Panc1 (cell line): ENCODE measurements at regions of chr2 and their contacts with region 1.

Region 1: DNA sequence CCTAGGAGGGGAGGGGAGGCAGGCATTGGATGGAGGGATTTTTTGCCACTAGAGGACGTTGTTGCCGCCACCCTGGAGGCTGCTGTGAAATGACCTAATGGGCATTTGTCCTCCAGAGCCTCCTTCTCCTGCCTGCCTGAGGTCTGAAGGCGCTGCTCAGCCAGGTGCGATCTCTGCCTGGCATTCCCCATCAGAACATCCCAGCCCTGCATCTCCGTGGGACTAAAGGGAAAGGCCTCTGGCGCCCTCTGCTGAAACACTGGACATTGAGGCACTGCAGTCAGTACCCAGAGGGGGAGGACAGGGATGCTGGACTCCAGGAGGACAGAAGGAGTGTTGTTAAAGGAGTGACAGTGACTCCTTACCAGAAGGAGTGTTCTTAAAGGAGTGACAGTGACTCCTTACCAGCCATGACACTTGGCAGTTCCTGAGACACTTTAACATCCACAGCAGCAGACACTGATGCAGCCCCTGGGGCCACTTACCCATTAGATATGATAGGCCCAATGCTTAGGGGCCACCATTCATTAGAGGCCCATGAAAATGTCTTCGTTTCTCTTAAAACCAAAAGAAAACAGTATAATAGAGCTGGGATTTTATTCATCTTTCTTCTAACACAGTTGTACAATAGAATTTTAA is 17.0 kb downstream of the THNSL2 start:
- DNase-seq: peak; percentile 30
- ATAC-seq: peak; percentile 90
- H3K4me3 ChIP-seq: no peak overlapping the region
- H3K27ac ChIP-seq: no peak overlapping the region
- H3K4me1 ChIP-seq: no peaks in the 10 kb centered on the region
- H3K27me3 ChIP-seq: no peaks in the 10 kb centered on the region
- CTCF ChIP-seq: peak; percentile 87

Region 2: GRCh38 chr2:88059979-88060906 is 126.9 kb before region 1 on chr2:
- CTCF ChIA-PET with region 1: interaction called, 4 read pairs
- POLR2A ChIA-PET with region 1: no interaction called
- in situ Hi-C with region 1: no loop called
- intact Hi-C with region 1: loop called (anchors 1 kb)
- DNase-seq: no peak
- ATAC-seq: peak; percentile 51; the same call in 1 of the 2 replicates
- H3K4me3 ChIP-seq: no peak overlapping the region
- H3K27ac ChIP-seq: no peak overlapping the region
- H3K4me1 ChIP-seq: peaks cover 4% of the 10 kb centered on the region; the same call in 1 of the 2 replicates
- H3K27me3 ChIP-seq: no peaks in the 10 kb centered on the region
- CTCF ChIP-seq: peak; percentile 87

Region 3: DNA sequence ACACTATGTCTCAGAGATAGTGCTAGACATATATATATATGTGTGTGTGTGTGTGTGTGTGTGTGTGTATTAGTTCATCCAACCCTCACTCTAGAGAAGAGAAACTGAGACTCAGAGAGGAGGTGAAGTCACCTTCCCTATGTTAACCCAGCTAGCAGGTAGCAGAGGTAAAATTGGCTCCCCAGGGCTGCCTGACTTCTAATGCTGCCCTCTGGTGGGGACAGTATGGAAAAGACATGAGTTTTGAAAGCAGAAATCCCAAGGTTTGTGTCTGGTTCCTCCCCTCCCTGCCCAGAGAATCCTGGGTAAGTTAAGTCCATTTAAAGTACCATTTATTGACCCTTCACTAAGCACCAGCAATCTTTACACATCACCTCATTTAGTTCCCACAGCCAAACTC is 120.7 kb after region 1 on chr2:
- CTCF ChIA-PET with region 1: no interaction called
- POLR2A ChIA-PET with region 1: no interaction called
- in situ Hi-C with region 1: no loop called
- intact Hi-C with region 1: loop called (anchors 5 kb)
- DNase-seq: peak; percentile 10
- ATAC-seq: peak; percentile 53; the same call in 1 of the 2 replicates
- H3K4me3 ChIP-seq: no peak overlapping the region
- H3K27ac ChIP-seq: no peak overlapping the region
- H3K4me1 ChIP-seq: no peaks in the 10 kb centered on the region
- H3K27me3 ChIP-seq: no peaks in the 10 kb centered on the region
- CTCF ChIP-seq: peak; percentile 75

Region 4: DNA sequence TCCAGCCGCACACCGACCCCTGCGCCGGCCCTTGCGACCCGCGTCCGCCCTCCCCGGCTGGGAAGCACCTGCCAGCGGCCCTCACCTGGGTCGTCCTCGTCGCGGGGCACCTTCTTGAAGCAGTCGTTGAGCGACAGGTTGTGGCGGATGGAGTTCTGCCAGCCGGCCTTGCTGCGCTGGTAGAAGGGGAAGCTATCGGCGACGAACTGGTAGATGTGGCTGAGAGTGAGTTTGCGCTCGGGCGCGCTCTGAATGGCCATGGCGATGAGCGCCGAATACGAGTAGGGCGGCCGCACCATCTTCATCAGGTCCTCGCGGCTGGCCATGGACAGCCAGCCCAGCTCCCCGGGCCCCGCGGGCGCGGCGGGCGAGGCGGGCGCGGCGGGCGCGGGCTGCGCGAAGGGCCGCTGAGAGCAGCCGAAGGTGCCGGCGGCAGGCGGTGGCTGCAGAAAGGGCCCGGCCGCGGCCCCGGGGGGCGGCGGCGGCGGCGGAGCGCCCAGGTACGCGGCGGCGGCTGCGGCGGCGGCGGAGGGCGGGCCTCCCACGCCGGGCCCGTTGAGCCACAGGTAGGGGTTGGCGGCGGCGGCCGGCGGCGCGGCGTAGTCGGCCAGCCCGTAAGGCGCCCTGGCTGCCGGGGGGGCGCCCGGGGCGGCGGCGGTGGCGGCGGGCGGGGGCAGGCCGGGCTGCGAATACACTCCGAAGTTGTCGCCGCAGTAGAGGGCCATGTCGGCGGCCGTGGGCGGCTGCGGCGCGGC is 264.8 kb after region 1 on chr2:
- CTCF ChIA-PET with region 1: interaction called, 5 read pairs
- POLR2A ChIA-PET with region 1: interaction called, 4 read pairs
- in situ Hi-C with region 1: no loop called
- intact Hi-C with region 1: loop called (anchors 5 kb)
- DNase-seq: no peak
- ATAC-seq: peak; percentile 67
- H3K4me3 ChIP-seq: peak overlapping the region; percentile 11 to 23; a peak in 2 of 4 replicates
- H3K27ac ChIP-seq: no peak overlapping the region
- H3K4me1 ChIP-seq: peaks cover 6% of the 10 kb centered on the region
- H3K27me3 ChIP-seq: peaks cover 33% of the 10 kb centered on the region
- CTCF ChIP-seq: no peak

Region 5: GRCh38 chr2:88554189-88554588 is 367.0 kb after region 1 on chr2:
- CTCF ChIA-PET with region 1: no interaction called
- POLR2A ChIA-PET with region 1: no interaction called
- in situ Hi-C with region 1: no loop called
- intact Hi-C with region 1: loop called (anchors 5 kb)
- DNase-seq: no peak
- ATAC-seq: peak; percentile 68; the same call in 1 of the 2 replicates
- H3K4me3 ChIP-seq: no peak overlapping the region
- H3K27ac ChIP-seq: no peak overlapping the region
- H3K4me1 ChIP-seq: no peaks in the 10 kb centered on the region
- H3K27me3 ChIP-seq: no peaks in the 10 kb centered on the region
- CTCF ChIP-seq: peak; percentile 62